ENCODE measurements at regions of chr21 and their contacts with region 1.

Region 1: DNA sequence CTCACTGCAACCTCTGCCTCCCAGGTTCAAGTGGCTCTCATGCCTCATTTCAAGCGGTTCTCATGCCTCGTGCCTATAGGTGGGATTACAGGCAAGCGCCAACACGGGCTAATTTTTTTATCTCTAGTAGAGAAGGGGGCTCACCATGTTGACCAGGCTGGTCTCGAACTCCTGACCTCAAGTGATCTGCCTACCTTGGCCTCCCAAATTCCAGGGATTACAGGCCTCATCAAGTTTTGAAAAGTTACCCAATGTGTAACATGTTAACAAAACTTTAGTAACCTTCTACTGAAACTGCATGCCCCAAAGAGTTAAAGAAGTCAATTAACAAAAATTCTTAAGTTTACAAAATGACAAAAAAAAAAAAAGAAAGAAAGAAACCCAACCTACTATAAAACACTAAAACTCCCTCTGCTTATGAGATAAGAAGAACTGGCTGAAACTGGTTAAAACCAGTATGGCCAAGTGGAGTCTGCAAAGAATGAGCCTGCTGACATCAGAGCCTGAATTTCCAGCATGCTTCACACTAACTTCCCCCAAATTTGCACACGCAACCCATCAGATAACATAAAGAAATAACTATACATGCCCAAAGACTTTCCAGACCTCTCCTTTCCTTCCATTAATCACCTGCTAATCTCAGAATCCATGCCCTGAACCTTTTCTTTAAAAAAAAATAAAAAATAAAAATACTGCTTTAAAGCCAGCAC is 25.5 kb upstream of the PSMG1 start:
- DNase-seq: no peak
- H3K4me3 Mint-ChIP-seq: no peak overlapping the region
- H3K27ac Mint-ChIP-seq: no peak overlapping the region
- H3K4me1 Mint-ChIP-seq: no peaks in the 10 kb centered on the region
- H3K27me3 Mint-ChIP-seq: no peaks in the 10 kb centered on the region
- CTCF ChIP-seq: no peak

Region 2: DNA sequence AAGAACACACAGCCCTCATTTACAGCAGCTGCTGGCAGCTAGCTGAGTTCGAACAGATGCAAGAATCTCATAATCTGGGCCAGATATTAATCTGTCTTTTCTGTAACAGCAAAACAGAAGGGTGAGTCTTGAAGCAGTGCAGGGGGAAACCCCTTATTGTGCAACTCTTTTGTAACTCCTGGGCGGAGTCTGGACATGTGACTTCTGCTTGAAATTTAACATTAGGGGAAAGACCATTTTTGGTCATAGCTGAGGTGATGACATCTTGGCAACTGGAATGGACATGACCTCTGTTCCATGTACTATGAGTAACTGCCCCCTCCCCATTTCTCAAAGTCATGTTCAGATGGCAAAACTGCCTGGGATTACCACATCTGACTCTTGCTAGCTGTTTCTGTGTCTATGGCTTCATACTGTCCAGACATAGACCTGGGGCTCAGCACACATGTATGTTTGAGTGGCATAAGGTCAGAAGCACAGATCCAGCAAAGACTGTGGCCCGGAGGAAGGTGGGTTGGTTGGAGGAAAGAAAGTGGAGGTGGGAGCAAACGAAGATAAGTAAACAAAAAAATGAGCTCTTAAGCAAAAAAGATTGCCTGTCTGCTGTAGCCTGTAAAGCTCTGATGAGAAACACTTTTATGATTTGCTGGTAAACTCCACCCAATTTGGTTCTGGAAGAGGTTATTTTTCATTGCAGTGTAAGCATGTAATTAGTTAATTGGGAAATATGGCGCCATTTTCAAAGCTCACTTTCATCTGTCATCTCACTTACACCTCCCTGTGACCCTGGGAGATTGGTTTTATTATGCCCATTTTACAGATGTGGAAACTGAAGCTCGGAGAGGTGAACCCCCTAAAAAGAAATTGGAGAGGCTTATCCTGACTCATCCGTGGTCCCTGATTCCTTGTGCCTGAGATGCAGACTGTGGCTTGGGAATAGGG is 377.0 kb before region 1 on chr21:
- CTCF ChIA-PET with region 1: no interaction called
- POLR2A ChIA-PET with region 1: no interaction called
- intact Hi-C with region 1: no loop called
- DNase-seq: peak; percentile 99
- H3K4me3 Mint-ChIP-seq: peak overlapping the region; percentile 7
- H3K27ac Mint-ChIP-seq: peak overlapping the region; percentile 90
- H3K4me1 Mint-ChIP-seq: peaks cover 24% of the 10 kb centered on the region
- H3K27me3 Mint-ChIP-seq: no peaks in the 10 kb centered on the region
- CTCF ChIP-seq: no peak

Region 3: DNA sequence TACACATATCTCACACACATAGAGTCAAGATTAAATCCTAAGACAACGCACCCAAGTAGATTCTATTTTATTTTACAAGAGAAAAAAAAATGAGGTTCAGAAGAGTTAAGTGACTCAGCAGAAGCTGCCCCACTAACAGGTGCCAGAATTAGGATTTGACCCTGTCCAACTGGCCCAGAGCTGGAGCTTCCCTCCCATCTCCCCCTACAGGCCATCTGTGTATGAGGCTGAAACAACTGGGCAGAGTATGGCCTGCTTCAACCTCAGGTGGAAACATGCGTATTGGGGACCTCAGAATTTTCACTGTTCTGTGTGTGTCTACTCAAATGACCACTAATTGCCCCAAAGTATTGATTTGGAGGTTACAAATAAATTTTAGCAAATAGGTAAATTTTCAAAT is 55.4 kb before region 1 on chr21:
- CTCF ChIA-PET with region 1: no interaction called
- POLR2A ChIA-PET with region 1: no interaction called
- intact Hi-C with region 1: no loop called
- DNase-seq: peak; percentile 41
- H3K4me3 Mint-ChIP-seq: no peak overlapping the region
- H3K27ac Mint-ChIP-seq: no peak overlapping the region
- H3K4me1 Mint-ChIP-seq: no peaks in the 10 kb centered on the region
- H3K27me3 Mint-ChIP-seq: no peaks in the 10 kb centered on the region
- CTCF ChIP-seq: peak; percentile 25

Region 4: GRCh38 chr21:39258207-39258606 is 49.4 kb after region 1 on chr21:
- CTCF ChIA-PET with region 1: no interaction called
- POLR2A ChIA-PET with region 1: no interaction called
- intact Hi-C with region 1: loop called (anchors 5 kb)
- DNase-seq: no peak
- H3K4me3 Mint-ChIP-seq: no peak overlapping the region
- H3K27ac Mint-ChIP-seq: peak overlapping the region; percentile 27
- H3K4me1 Mint-ChIP-seq: no peaks in the 10 kb centered on the region
- H3K27me3 Mint-ChIP-seq: no peaks in the 10 kb centered on the region
- CTCF ChIP-seq: no peak

Region 5: DNA sequence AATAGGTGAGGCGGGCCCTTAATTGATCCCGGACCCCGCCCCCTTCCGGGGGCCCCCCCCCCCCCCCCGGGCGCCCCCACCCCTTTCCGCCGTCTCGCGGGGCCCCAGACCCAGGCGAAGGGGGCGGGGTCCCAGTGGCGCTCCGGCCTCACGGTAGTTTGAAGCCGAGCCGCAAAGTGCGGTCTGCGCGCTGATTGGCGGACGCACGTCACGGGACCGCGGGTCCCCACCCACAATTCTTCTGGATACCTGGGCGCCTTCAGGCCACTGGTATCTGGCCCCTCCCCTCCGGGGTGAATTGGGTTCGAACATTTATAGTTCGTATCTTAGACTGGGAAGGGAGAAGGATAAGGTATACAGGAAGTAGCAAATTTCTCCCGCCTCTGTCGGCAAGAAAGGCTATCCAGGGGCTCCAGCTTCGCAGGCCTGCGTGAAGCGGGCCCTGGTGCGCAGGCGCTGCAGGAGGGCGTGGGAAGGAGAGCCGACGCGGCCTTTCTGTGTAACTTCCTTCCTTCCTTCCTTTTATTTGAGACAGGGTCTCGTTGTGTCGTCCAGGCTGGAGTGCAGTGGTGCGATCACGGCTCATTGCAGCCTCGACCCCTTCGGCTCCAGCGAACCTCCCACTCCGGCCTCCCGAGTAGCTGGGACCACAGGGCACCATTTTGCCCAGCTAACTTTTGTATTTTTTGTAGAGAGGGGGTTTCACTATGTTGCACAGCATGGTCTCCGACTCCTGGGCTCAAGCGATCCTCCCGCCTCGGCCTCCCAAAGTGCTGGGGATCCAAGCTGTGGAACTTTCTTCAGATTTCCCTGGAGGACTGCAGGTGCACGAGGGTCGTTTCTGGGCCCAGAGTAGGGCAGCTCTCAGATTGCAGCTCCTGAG is 140.7 kb after region 1 on chr21:
- CTCF ChIA-PET with region 1: no interaction called
- POLR2A ChIA-PET with region 1: no interaction called
- intact Hi-C with region 1: no loop called
- DNase-seq: peak; percentile 97
- H3K4me3 Mint-ChIP-seq: peak overlapping the region; percentile 89
- H3K27ac Mint-ChIP-seq: peak overlapping the region; percentile 79
- H3K4me1 Mint-ChIP-seq: peaks cover 34% of the 10 kb centered on the region
- H3K27me3 Mint-ChIP-seq: no peaks in the 10 kb centered on the region
- CTCF ChIP-seq: no peak